CD4-positive, alpha-beta memory T cell (primary cell): ENCODE measurements at regions of chr2 and their contacts with region 1.

Region 1: DNA sequence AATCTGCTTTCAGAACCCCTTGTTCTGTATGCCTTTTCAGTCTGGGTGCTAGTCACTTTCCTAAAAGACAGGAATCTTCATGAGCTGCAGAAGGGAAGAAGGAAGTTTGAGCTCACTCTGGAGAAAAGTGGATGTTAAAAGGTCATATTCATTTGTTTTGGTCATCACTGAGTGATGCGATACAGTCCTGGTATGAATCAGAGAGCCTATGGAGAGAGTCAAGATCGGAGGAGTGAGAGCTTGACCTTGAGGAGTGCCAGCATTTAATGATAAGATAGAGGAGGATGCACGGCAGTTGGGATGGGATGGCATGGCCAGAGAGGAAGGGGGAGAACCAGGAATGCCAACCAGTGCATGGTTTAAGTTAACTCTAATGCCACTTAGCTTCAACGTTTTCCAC is 19.6 kb downstream of the USP39 start:
- DNase-seq: no peak
- H3K4me3 ChIP-seq: no peak overlapping the region
- H3K4me3 Mint-ChIP-seq: no peak overlapping the region
- H3K27ac ChIP-seq: no peak overlapping the region
- H3K27ac Mint-ChIP-seq: peak overlapping the region in 2 of 7 donors; percentile 18 to 36
- H3K4me1 ChIP-seq: no peaks in the 10 kb centered on the region
- H3K4me1 Mint-ChIP-seq: peaks cover 11 to 18% (median 14%) of the 10 kb centered on the region in 4 donors
- H3K27me3 ChIP-seq: no peaks in the 10 kb centered on the region
- H3K27me3 Mint-ChIP-seq: no peaks in the 10 kb centered on the region

Region 2: DNA sequence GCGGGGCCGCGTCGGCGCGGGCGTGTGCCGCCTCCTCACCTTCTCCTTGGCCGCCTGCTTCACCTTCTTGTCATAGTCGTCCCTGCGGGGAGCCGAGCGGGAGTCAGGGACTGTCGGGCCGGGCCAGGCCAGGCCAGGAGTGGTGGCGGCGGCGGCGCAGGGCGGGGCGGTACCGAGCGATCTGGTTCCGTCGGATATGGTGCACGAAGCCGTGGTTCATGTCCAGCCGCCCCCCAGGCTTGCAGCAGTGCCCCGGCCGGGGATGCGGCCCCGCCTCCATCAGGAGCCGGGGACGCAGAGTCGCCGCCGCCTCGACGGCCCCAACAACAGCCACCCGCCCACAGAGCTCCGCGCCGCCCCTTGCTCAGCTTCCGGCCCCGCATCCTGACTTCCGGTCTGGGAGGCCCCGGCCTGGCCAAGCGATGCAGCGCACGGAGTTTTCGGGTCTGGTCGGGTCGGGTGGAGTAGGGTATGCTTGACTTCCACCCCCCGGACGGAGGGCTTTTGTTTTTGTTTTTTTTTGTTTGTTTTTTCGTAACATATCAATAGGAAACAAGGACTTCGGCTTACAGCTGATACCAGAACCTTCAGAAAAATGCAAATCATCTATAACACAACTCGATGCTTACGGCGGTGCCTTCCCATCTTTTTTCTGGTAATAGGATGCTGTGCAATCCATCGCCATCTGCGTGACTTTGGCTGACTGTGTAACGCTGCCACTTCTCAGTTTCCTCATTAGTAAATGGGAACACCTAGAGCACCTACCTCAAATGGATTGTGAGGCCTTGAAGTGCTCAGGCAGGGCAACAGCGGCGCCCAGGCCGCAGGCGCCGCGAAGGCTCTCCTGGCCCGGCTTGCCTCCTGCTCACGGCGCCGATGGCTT is 23.7 kb before region 1 on chr2 and contains the start of gene C2orf68:
- CTCF ChIA-PET with region 1: interaction called, 16 read pairs
- POLR2A ChIA-PET with region 1: interaction called, 6 read pairs
- intact Hi-C with region 1: no loop called
- DNase-seq: peak; percentile 77 to 86 (median 77)
- H3K4me3 ChIP-seq: peak within 1 kb of the TSS; percentile 57 to 86
- H3K4me3 Mint-ChIP-seq: peak within 1 kb of the TSS; percentile 96 to 100 (median 98)
- H3K27ac ChIP-seq: peak within 1 kb of the TSS; percentile 72
- H3K27ac Mint-ChIP-seq: peak within 1 kb of the TSS; percentile 94 to 97 (median 97)
- H3K4me1 ChIP-seq: peaks cover 30% of the 10 kb centered on the region
- H3K4me1 Mint-ChIP-seq: peaks cover 13 to 41% (median 25%) of the 10 kb centered on the region in 4 donors
- H3K27me3 ChIP-seq: no peaks in the 10 kb centered on the region
- H3K27me3 Mint-ChIP-seq: no peaks in the 10 kb centered on the region
- total RNA-seq, gene C2orf68: 87.3 to 89.9 TPM

Region 3: GRCh38 chr2:85619617-85620016 is 16.0 kb before region 1 on chr2:
- CTCF ChIA-PET with region 1: interaction called, 68 read pairs
- POLR2A ChIA-PET with region 1: interaction called, 6 read pairs
- intact Hi-C with region 1: no loop called
- DNase-seq: no peak
- H3K4me3 ChIP-seq: no peak overlapping the region
- H3K4me3 Mint-ChIP-seq: no peak overlapping the region
- H3K27ac ChIP-seq: no peak overlapping the region
- H3K27ac Mint-ChIP-seq: peak overlapping the region in 1 of 7 donors; percentile 60
- H3K4me1 ChIP-seq: peaks cover 31% of the 10 kb centered on the region
- H3K4me1 Mint-ChIP-seq: peaks cover 14 to 33% (median 24%) of the 10 kb centered on the region in 4 donors
- H3K27me3 ChIP-seq: no peaks in the 10 kb centered on the region
- H3K27me3 Mint-ChIP-seq: no peaks in the 10 kb centered on the region

Region 4: DNA sequence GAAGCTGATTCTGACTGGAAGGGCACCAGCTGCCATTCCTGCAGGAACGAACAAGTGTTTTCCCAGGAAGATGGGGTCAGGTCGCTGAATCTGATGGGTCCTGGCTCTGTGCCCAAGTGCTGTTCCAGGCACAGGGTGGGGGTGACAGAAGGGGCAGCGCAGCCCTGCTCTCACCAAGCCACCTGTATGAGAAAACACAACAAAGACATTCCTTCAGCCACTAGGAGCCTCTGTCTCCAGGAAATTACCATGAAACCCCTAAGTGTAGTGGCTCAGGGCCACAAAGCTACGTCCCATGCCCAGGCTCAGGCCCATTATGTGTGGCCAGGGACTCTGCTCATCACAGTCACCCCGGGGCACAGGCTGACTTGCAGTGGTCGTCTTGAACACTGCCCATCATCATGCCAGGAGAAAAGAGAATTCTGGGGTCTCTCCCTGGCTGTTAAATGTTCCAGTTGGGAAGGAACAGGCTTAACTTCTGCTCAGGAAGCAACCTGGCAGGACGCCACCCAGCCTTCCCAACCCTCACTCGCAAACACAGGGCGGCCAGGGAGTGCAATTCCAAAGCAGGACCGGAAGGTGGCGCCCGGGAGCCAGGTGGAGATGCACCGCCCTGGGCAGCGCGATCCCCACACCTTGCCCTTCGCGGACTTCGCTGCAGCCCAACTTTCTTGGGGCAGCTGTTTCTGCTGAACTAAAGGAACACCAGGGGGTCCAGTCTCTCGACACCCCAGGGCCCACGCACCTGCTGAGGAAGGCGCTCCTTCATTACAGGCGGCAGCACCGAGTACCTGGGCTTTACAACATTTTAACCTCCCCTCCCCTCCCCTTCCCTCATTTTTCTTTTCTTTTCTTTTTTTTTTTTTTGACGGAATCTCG is 43.4 kb after region 1 on chr2:
- CTCF ChIA-PET with region 1: no interaction called
- POLR2A ChIA-PET with region 1: no interaction called
- intact Hi-C with region 1: no loop called
- DNase-seq: peak; percentile 64 to 75 (median 68)
- H3K4me3 ChIP-seq: no peak overlapping the region
- H3K4me3 Mint-ChIP-seq: peak overlapping the region in 5 of 8 donors; percentile 20 to 52 (median 33)
- H3K27ac ChIP-seq: no peak overlapping the region
- H3K27ac Mint-ChIP-seq: no peak overlapping the region
- H3K4me1 ChIP-seq: peaks cover 4% of the 10 kb centered on the region
- H3K4me1 Mint-ChIP-seq: peaks cover 0 to 5% (median under 1%) of the 10 kb centered on the region in 4 donors
- H3K27me3 ChIP-seq: no peaks in the 10 kb centered on the region
- H3K27me3 Mint-ChIP-seq: peaks cover 0 to 2% of the 10 kb centered on the region in 2 donors